ENCODE measurements at regions of chr12 and their contacts with region 1.

Region 1: DNA sequence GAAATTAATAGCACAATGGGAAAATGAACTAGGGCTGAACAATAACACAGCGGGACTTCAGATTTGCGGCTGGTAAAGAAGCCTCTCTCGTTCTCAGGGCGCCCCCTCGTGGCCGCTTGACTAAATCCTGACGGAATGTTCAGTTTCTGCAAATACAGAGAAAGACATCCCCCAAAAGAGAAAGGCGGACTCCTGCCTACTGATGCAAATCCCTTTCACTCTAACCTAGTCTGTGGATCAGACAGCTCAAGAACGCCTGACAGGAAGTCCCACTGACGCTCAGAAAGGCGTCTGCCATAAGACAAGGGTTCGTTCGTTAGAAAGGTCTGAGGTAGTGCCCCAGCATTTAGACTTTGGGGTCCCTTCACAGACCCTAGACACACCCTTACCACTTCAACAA is 2.5 kb downstream of the NUAK1 start:
- DNase-seq: peak; percentile 84
- H3K4me3 ChIP-seq: peak overlapping the region; percentile 88
- CTCF ChIP-seq: peak; percentile 66

Region 2: GRCh38 chr12:105409801-105410471 is 726.3 kb before region 1 on chr12:
- in situ Hi-C with region 1: loop called (anchors 10 kb)
- DNase-seq: no peak
- H3K4me3 ChIP-seq: no peak overlapping the region
- CTCF ChIP-seq: no peak

Region 3: DNA sequence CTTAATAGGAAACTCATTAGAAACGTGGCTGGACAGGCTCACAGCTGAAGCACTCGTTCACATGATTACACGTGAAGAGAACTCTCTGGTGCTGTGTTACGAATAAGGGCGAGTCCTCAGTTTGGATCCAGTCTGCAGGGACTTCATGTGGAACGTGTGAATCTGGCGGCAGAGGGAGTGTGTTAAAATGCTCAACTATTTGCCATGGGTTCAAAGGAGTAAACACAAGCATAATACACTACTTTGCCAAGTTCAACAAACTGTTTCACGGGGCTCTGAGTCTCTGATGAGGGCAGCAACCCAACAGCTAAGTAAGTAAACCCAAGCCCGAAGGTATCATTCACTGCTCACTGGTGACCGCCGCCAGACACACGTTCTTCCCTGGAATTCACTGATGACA is 39.9 kb before region 1 on chr12:
- in situ Hi-C with region 1: no loop called
- DNase-seq: no peak
- H3K4me3 ChIP-seq: no peak overlapping the region
- CTCF ChIP-seq: no peak